Colonic mucosa (tissue), 4 donors: ENCODE measurements at regions of chr14 and their contacts with region 1.

Region 1: DNA sequence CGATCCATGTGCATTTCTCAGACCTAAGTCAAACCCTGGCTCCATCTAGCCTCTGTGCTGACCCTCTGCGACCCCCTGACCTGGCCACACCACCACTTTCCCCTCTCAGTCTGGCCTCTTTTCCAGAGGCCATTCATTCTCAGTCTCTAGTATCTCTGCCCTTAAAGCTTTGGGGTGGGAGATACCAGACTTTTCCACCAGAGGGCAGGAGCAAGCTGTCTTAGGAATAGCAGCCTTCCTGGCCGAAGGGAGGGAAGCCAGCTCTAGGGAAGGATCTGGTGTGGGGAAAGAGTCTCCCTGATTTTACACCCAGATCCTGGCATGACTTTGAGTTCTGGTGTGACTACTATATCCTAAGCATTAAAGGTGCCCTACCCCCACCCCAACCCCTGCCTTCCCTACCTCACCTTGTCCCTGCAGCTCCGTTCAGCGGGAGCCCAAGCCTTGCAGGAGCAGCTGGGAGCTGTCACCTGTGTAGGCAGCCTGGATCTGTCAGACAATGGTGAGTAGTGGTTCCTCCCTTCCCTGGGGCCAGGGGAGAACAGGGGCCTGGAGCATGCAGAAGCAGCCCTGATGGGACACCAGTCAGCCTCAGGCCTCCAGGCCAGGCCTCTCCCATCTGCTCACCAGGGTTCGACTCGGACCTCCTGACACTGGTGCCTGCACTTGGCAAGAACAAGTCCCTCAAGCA is 6.6 kb downstream of the CARMIL3 start:
- DNase-seq: peak; percentile 57
- H3K4me3 ChIP-seq: no peak overlapping the region
- H3K27ac ChIP-seq: no peak overlapping the region
- H3K4me1 ChIP-seq: no peaks in the 10 kb centered on the region
- H3K27me3 ChIP-seq: no peaks in the 10 kb centered on the region
- CTCF ChIP-seq: peak; percentile 84

Region 2: DNA sequence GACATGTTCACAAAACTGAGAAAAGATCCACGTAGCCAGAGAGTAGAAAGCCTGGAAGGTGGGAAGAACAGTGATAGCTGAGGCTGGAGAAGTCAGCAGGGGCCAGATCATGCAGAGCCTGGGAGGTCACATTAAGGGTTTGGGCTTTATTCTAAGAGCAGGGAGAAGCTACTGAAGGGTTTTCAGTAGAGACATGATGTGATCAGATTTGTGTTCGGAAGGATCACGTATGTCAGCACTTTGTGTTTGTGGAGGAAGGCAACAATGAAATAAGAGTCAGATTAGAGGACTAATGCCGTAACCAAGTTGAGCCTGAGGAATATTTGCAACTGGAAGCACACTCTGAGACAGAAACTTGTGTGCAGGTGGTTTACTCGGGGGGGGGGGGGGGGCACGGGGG is 31.5 kb after region 1 on chr14:
- intact Hi-C with region 1: loop called (anchors 2 kb)
- DNase-seq: no peak
- H3K4me3 ChIP-seq: no peak overlapping the region
- H3K27ac ChIP-seq: no peak overlapping the region
- H3K4me1 ChIP-seq: peaks cover 6% of the 10 kb centered on the region
- H3K27me3 ChIP-seq: no peaks in the 10 kb centered on the region
- CTCF ChIP-seq: no peak

Region 3: DNA sequence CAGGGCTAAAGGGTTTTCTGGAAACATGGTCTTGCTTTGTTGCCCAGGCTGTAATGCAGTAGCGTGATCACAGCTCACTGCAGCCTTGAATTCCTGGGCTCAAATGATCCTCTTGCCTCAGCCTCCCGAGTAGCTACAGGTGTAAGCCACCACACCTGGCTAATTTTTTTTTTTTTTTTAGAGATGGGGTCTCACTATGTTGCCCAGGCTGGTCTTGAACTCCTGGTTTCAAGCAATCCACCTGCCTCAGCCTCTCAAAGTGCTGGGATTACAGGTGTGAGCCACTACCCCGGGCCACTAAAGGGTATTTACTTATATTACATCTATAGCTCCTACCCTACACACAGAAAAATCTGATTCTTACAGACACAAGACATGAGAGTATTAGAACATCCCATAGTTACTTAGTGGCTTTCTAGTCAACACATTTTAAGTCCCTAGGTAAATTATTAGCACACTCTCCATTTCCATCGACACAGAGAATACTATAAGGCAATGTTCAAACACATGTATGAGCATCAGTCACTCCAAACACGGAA is 50.0 kb after region 1 on chr14:
- intact Hi-C with region 1: loop called (anchors 2 kb)
- DNase-seq: no peak
- H3K4me3 ChIP-seq: no peak overlapping the region
- H3K27ac ChIP-seq: peak overlapping the region; percentile 13
- H3K4me1 ChIP-seq: no peaks in the 10 kb centered on the region
- H3K27me3 ChIP-seq: no peaks in the 10 kb centered on the region
- CTCF ChIP-seq: no peak